Heart left ventricle (tissue), 16 donors: ENCODE measurements at regions of chr18 and their contacts with region 1.

Region 1: GRCh38 chr18:55234366-55235093 is 275.3 kb upstream of the CCDC68 start:
- DNase-seq: peak; percentile 67 to 79 (median 75)
- ATAC-seq: peak; percentile 76 to 92 (median 88)
- H3K4me3 ChIP-seq: no peak overlapping the region
- H3K27ac ChIP-seq: peak overlapping the region in 11 of 12 donors; percentile 47 to 77 (median 62)
- H3K4me1 ChIP-seq: peaks cover 0 to 55% (median 37%) of the 10 kb centered on the region in 12 donors
- H3K27me3 ChIP-seq: no peaks in the 10 kb centered on the region
- CTCF ChIP-seq: peak; percentile 60 to 87 (median 79)
- POLR2A ChIP-seq: no peak

Region 2: DNA sequence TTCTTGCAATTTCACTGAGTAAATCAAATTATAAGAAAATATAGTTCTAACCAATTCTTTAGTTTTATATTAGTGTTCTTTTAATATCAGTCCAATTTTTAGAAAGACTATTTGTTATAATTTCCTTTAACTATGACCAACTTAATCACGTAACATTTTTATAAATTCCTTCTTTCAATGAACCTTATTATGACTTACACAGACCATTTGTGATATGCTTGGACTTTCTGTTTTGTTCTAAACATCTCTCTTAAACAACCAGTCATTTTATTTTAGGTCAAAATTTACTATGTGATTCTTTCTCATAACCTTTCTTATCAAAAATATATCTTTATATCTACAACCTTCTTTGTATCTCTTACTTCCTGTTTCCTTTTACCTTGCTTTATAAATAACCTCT is 682.9 kb before region 1 on chr18:
- intact Hi-C with region 1: no loop called
- DNase-seq: no peak
- ATAC-seq: no peak
- H3K4me3 ChIP-seq: no peak overlapping the region
- H3K27ac ChIP-seq: no peak overlapping the region
- H3K4me1 ChIP-seq: no peaks in the 10 kb centered on the region
- H3K27me3 ChIP-seq: no peaks in the 10 kb centered on the region
- CTCF ChIP-seq: no peak
- POLR2A ChIP-seq: no peak

Region 3: DNA sequence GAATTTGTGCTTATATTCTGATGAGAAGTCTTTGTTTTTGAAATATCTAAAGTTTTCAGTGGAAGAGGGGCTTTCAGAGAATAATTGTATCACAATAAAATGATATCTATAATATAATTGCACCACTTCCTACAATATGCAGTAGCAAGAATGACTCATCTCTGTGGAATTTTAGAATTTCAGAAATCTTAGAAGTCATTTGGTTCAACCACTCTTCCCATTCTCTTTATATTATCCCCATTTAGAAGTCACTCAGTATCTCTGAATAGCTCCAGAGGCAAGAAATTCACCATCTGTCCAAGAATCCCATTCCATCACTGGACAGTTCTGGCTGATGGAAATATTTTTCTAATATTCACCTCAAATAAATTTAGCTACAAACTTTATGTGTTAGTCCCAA is 215.9 kb before region 1 on chr18:
- intact Hi-C with region 1: no loop called
- DNase-seq: no peak
- ATAC-seq: no peak
- H3K4me3 ChIP-seq: no peak overlapping the region
- H3K27ac ChIP-seq: no peak overlapping the region
- H3K4me1 ChIP-seq: no peaks in the 10 kb centered on the region
- H3K27me3 ChIP-seq: no peaks in the 10 kb centered on the region
- CTCF ChIP-seq: no peak
- POLR2A ChIP-seq: no peak

Region 4: DNA sequence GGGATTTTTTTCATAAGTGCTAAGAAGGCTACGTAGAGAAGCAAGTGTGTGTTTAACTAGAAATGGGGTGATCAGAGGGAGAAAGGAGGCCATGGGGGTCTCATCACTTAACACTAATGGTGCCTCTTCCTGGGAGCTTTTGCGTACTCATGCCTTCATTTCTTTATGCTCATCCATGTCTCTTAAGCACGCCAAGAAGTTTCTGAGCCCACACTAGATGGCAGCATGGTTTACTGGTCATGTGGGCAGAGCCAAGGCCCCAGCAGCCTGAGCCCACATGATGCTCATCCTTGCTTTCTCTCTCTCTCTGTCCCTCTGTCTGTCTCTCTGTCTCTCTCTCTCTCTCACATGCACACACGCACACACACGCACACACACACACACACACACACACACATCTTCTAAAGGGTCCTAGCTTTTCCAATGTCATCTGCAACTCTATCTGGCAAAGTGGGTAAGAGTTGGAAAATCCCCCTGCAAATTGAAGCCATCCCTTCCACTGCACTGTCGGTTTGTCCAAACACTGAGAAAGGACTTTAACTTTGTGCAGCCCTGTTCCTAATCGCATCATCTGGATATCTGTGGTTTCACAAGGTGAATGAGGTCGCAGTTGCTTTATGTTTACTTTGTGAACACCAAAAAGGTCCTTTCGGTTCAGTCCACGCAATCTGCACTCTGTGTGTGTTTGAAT is 138.1 kb before region 1 on chr18:
- intact Hi-C with region 1: loop called in 2 of 10 experiments (anchors 5 to 10 kb)
- DNase-seq: peak in 4 of 5 donors; percentile 38 to 44 (median 41)
- ATAC-seq: peak; percentile 77 to 87 (median 80)
- H3K4me3 ChIP-seq: no peak overlapping the region
- H3K27ac ChIP-seq: no peak overlapping the region
- H3K4me1 ChIP-seq: peaks cover 0 to 15% (median 5%) of the 10 kb centered on the region in 12 donors
- H3K27me3 ChIP-seq: no peaks in the 10 kb centered on the region
- CTCF ChIP-seq: peak in 11 of 12 donors; percentile 23 to 59 (median 36)
- POLR2A ChIP-seq: no peak

Region 5: GRCh38 chr18:55322178-55322735 is 87.7 kb after region 1 on chr18:
- intact Hi-C with region 1: no loop called
- DNase-seq: peak; percentile 87 to 94 (median 89)
- ATAC-seq: peak; percentile 76 to 90 (median 87)
- H3K4me3 ChIP-seq: peak overlapping the region; percentile 49 to 79 (median 66)
- H3K27ac ChIP-seq: peak overlapping the region; percentile 83 to 99 (median 94)
- H3K4me1 ChIP-seq: peaks cover 0 to 44% (median 31%) of the 10 kb centered on the region in 12 donors
- H3K27me3 ChIP-seq: no peaks in the 10 kb centered on the region
- CTCF ChIP-seq: peak in 7 of 12 donors; percentile 12 to 48 (median 33)
- POLR2A ChIP-seq: peak in 1 of 2 donors; percentile 75

Region 6: DNA sequence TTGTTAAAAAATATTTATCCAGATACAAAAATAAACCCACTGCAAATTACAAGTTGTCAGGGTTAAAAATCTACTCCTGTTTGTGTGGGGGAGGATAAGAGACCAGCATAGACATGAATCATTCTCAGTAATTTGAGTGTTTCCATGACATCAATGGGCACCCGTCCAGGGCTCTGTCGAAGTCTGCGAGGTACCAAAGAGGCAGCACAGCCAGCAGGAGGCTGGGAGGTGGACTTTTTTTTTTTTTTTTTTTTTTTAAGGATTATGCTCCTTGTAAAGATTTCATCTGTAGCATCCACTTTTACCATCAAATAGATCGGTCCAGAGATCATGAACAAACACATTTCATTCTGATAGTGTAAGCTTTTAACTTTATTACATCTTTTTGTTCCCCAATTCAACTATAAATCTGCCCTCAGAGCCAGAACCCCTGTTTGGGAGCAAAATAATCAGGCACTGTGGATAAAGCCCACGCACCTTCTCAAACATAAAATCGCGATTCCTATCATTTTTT is 171.4 kb after region 1 on chr18:
- intact Hi-C with region 1: loop called in 8 of 10 experiments (anchors 5 to 10 kb)
- DNase-seq: peak; percentile 87 to 93 (median 92)
- ATAC-seq: peak; percentile 83 to 91 (median 88)
- H3K4me3 ChIP-seq: peak overlapping the region in 1 of 12 donors; percentile 3
- H3K27ac ChIP-seq: peak overlapping the region; percentile 50 to 86 (median 80)
- H3K4me1 ChIP-seq: peaks cover 0 to 55% (median 20%) of the 10 kb centered on the region in 12 donors
- H3K27me3 ChIP-seq: no peaks in the 10 kb centered on the region
- CTCF ChIP-seq: peak in 5 of 12 donors; percentile 5 to 35 (median 22)
- POLR2A ChIP-seq: no peak

Region 7: DNA sequence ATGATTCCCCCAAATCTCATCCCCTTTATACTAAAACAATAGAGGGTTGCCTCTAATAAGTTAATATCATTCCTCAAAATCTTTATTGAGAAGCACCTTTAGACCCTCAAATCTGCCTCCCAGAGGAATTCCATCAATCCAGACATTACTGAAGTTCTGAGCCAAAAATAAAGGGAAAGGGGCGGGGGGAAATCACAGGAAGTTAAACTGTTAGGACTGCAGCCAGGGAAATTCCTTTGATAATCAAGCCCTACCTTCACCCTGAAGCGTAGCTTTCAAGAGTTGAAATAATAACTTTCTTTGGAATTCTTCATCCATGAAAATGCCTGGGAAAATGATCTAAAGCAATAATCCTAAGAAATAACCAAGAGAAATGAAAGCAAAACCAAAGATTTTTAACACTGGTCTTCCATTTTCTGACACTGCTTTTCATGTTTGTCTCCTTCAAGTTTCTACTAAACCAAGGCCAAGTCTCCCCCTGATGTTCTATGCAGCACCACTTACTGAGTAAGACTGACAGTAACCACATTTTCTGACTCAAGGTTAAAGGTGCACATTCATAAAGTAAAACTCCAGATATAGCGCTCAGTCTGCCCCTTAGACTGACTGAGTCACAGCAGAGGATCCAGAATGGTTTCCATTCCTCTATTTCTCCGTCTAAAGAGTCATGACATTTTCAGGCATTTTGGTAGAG is 275.2 kb after region 1 on chr18:
- intact Hi-C with region 1: loop called in 1 of 10 experiments (anchors 10 kb)
- DNase-seq: peak in 2 of 5 donors; percentile 40 to 63
- ATAC-seq: peak in 2 of 4 donors; percentile 45 to 64
- H3K4me3 ChIP-seq: peak overlapping the region in 11 of 12 donors; percentile 1 to 50 (median 34)
- H3K27ac ChIP-seq: peak overlapping the region; percentile 52 to 94 (median 86)
- H3K4me1 ChIP-seq: peaks cover 0 to 55% (median 18%) of the 10 kb centered on the region in 12 donors
- H3K27me3 ChIP-seq: no peaks in the 10 kb centered on the region
- CTCF ChIP-seq: no peak
- POLR2A ChIP-seq: no peak

Region 8: GRCh38 chr18:55861266-55861665 is 626.7 kb after region 1 on chr18:
- intact Hi-C with region 1: loop called in 6 of 10 experiments (anchors 5 to 10 kb)
- DNase-seq: no peak
- ATAC-seq: peak in 1 of 4 donors; percentile 24
- H3K4me3 ChIP-seq: no peak overlapping the region
- H3K27ac ChIP-seq: no peak overlapping the region
- H3K4me1 ChIP-seq: peaks cover 0 to 23% (median 6%) of the 10 kb centered on the region in 12 donors
- H3K27me3 ChIP-seq: no peaks in the 10 kb centered on the region
- CTCF ChIP-seq: peak in 9 of 12 donors; percentile 28 to 57 (median 41)
- POLR2A ChIP-seq: no peak

Region 9: GRCh38 chr18:56083097-56083521 is 848.6 kb after region 1 on chr18:
- intact Hi-C with region 1: loop called in 1 of 10 experiments (anchors 10 kb)
- DNase-seq: peak; percentile 66 to 89 (median 77)
- ATAC-seq: peak; percentile 73 to 91 (median 80)
- H3K4me3 ChIP-seq: no peak overlapping the region
- H3K27ac ChIP-seq: peak overlapping the region in 10 of 12 donors; percentile 16 to 81 (median 68)
- H3K4me1 ChIP-seq: peaks cover 0 to 35% (median 21%) of the 10 kb centered on the region in 12 donors
- H3K27me3 ChIP-seq: no peaks in the 10 kb centered on the region
- CTCF ChIP-seq: peak in 10 of 12 donors; percentile 7 to 58 (median 29)
- POLR2A ChIP-seq: no peak

Region 10: GRCh38 chr18:56575819-56576663 is 1341.5 kb after region 1 on chr18:
- intact Hi-C with region 1: loop called in 9 of 10 experiments (anchors 2 to 10 kb)
- DNase-seq: peak in 1 of 5 donors; percentile 45
- ATAC-seq: peak; percentile 72 to 90 (median 80)
- H3K4me3 ChIP-seq: peak overlapping the region in 2 of 12 donors; percentile 6 to 26
- H3K27ac ChIP-seq: peak overlapping the region in 11 of 12 donors; percentile 39 to 84 (median 73)
- H3K4me1 ChIP-seq: peaks cover 10 to 38% (median 29%) of the 10 kb centered on the region in 12 donors
- H3K27me3 ChIP-seq: no peaks in the 10 kb centered on the region
- CTCF ChIP-seq: peak; percentile 55 to 88 (median 77)
- POLR2A ChIP-seq: no peak